ENCODE measurements at regions of chr1 and their contacts with region 1.

Region 1: GRCh38 chr1:7646981-7647901 is 123.9 kb upstream of the VAMP3 start:
- DNase-seq: peak; percentile 89
- ATAC-seq: peak; percentile 65

Region 2: GRCh38 chr1:6711174-6711573 is 936.1 kb before region 1 on chr1:
- intact Hi-C with region 1: loop called (anchors 10 kb)
- DNase-seq: no peak
- ATAC-seq: no peak

Region 3: DNA sequence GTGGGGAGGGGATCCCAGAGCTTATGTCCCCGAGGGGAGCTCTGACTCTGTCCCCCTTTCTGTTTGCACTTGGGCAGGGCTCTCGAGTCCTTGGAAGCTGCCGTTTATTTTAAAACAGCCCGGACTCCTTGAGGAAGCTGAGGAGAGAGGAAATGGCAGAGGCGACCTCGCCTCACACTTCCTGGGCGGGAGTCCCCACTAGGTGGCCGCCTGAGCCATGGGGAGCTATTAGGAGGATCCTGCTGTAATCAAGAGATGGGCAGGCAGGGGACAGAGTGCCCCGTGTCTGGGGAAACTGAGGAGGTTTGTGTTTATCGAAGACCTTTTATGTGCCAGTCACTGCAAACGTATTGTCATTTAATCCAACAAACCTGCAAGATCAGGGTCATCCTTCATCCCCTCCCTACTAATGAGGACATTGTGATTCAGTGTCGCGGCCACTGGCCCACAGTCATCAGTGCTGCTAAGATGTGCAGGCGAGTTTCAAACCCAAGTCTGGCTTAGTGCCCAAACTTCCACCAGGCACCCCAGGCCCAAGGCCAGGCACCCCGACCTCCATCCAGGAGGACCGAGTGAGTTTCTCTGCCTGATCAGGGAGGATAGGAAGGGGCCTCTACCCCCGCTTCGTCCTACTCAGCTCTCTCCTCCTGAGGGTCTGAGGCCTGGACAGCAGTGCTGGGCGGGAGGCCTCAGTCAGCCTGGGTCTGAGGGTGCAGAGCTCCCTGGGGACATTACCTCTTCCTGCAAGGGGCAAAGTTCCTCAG is 193.0 kb before region 1 on chr1:
- intact Hi-C with region 1: loop called (anchors 5 kb)
- DNase-seq: no peak
- ATAC-seq: peak; percentile 46

Region 4: DNA sequence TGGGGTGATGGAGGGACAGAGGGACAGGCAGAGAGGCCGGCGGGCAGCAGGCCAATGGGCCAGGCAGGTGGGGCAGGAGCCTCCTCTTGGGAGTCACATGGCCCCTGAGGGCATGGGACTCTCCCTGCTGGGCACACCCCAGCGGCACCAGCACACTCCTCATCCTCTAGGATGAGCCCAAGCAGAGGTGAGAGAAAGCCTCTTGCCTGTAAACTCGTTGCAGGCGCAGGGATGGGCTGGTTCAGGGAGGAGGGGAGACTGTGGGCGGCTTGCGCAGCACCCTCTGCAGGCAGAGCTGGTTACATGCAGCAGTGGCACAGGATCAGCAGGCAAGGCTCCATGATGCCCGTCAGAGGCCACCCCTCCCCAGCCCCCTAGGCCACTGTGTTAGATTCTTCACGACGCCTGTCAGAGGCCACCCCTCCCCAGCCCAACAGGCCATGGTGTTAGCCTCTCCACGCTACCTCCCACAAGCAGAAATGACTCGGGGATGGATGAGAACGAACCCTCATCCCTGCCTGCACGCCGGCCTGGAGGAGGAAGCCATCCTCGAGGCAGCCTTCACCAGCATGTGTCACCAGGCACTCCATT is 85.8 kb before region 1 on chr1:
- intact Hi-C with region 1: no loop called
- DNase-seq: no peak
- ATAC-seq: no peak